ENCODE measurements at regions of chr5 and their contacts with region 1.

Region 1: DNA sequence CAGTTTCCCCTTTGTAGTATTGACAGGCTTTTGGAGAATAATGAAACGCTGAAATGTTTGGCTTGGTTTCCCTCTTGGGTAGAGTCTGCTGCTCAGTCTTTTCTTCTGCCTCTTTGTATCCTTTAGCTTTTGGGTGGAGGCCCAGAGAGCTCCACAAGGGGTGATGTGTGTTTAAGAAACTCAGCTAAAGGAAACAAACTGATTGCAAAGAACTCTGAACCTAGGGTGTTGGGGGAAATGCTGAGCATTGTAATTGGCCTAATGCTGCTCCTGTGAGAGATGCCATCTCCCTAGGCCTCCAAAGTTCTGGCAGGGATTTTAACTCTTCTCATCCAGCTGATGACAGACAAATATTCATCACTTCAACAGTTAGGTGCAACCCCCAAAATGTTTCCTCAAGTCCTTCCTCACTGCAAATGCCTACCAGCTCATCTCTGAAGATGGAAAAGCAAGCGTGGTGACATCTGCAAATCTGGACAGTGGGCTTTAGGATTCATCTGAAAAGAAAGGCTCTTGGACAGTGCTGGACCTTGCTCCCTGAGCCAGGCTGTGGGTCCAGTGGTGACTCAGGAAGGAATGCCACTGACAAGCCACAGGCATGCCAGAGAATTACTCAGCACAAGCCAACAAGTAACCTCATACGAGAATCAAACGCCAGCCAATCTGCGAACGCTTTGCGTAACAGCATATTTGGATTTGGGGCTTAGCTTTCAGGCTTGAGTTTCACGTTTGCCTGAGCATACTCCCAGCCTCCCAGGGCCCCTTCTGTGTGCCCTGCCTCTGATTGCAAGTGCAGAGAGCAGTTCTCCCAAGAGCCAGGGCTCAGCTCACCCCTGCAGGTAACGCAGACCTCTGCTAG is 30.5 kb upstream of the ZSWIM6 start:
- DNase-seq: peak; percentile 99
- H3K4me3 ChIP-seq: peak overlapping the region; percentile 47
- H3K27ac ChIP-seq: peak overlapping the region; percentile 92
- H3K27me3 ChIP-seq: no peaks in the 10 kb centered on the region
- CTCF ChIP-seq: peak; percentile 27

Region 2: DNA sequence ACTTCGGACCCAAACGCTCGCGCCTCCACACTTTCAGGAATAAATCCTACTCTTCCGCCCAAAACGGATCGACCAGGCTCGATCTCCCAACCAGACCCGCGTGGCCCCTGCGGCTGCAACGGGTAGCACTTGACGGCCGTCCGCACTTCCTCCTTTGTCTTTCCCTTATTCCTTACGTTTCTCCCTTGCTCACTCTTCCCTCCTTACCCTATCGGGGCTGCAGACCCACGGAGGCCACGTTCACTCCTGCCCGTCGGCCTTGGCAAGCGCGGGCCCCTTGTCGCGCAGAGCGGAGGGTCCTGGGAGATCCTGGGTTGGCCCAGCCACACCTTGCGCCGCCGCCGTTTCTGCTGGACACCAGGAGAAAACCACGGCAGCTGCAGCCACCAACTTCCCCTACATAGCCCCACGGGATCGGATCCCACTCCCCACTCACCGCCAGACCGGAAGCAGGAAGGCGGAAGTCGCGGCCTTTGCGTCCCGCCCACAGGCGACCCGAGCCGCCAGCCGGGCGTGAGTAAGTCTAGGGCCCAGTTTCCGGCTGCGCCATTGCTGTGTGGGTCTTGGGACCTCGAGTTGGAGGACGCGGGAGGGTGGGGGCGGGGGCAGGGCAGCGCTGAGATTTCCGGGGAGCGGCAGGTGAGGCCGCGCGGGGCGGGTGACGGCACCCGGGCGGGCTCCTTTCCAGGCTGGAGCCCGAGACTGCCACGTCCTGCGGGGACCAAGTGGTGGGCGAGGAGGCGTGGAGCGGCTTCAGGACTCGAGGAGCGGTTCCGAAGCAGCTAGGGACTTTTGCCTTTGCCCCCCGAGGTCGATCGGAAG is 139.3 kb before region 1 on chr5 and contains the start of gene SMIM15:
- CTCF ChIA-PET with region 1: interaction called, 8 read pairs
- POLR2A ChIA-PET with region 1: interaction called, 10 read pairs
- DNase-seq: peak; percentile 66
- H3K4me3 ChIP-seq: peak within 1 kb of the TSS; percentile 65
- H3K27ac ChIP-seq: peak within 1 kb of the TSS; percentile 89
- H3K27me3 ChIP-seq: no peaks in the 10 kb centered on the region
- CTCF ChIP-seq: no peak
- polyA plus RNA-seq, gene SMIM15: 67.5 and 88.2 TPM in 2 replicates

Region 3: DNA sequence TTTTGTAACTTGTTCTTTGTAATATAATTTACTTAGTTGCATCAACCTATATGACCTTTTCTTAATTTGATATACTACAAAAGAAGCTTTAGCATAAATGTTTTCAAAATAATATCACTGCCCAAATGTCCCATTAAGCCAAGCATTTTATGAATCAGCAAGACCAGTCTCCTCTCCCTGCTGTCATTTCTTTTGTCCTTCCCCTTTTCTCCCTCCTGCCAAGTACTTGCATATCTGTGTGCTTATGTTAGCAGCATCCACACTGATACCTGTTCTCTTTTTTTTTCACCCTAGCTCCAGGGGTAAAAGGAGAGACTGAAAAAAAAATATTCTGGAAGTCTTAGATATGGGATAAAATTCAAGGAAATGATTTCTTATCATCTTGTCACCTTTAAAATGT is 100.2 kb after region 1 on chr5:
- CTCF ChIA-PET with region 1: no interaction called
- POLR2A ChIA-PET with region 1: no interaction called
- DNase-seq: no peak
- H3K4me3 ChIP-seq: no peak overlapping the region
- H3K27ac ChIP-seq: no peak overlapping the region
- H3K27me3 ChIP-seq: no peaks in the 10 kb centered on the region
- CTCF ChIP-seq: no peak

Region 4: DNA sequence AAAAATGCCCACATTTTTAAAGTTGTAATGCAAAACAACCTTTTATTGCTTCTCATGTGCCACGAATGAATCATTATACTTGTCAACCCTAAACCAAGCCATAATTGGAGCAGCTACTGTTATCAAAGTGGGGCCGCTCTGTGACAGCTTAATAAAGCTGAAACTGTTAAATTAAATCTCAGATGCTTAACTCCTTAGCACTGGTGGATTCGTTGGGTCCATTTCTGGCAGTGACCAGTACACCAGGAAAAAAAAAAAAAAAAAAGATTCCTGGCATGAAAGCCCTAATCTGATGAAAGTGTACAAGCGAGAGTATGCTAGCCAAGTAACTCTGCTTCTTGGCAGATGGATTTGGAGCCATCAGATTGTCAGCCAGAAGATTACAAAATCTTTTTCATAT is 195.3 kb after region 1 on chr5:
- CTCF ChIA-PET with region 1: no interaction called
- POLR2A ChIA-PET with region 1: no interaction called
- DNase-seq: no peak
- H3K4me3 ChIP-seq: no peak overlapping the region
- H3K27ac ChIP-seq: no peak overlapping the region
- H3K27me3 ChIP-seq: no peaks in the 10 kb centered on the region
- CTCF ChIP-seq: no peak